ENCODE measurements at regions of chr2 and their contacts with region 1.

Region 1: DNA sequence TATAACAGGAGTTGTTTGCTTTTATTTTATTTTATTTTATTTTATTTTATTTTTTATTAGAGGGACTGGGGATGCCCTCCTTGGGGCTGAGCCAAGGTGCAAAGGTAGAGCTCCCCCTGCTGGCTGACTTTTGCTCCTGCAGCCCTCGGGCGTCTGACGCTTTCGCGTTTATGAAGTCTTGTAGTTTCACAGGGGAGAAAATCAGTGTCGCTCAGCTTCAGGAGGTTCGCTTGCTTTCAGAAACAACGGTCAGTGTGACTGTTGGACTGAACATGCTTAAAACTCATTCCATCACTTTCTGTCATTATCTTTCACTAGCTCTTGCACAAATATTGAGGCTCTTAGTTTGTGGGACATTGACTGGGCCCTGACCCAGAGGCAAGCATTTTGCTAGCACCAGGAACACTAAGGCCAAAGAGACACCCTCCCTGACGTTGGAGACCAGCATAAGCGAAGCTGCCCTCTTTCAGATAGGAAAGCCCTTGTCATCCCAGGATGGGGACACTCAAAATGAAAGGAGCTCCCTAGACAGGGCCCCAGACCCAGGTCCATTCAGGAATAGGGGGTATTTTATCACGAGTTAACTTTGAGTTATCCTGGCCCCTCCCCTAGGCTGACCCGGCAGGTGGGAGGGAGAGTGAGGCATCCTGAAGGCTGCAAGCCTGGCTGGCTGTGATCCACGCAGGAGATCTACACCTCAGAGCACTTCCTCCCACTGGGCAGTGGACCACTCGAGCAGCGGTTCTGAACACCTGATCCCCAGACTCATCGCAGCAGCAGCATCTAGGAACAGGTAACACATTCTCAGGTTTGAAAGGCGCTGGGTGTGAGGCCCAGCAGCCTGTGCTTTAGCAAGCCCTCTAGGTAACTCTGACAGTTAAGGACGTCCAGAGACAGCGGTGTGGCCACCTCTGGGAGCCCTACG is 34.4 kb downstream of the LGALSL start:
- DNase-seq: peak; percentile 90

Region 2: GRCh38 chr2:64045938-64046337 is 442.4 kb before region 1 on chr2:
- intact Hi-C with region 1: loop called (anchors 5 kb)
- DNase-seq: no peak

Region 3: DNA sequence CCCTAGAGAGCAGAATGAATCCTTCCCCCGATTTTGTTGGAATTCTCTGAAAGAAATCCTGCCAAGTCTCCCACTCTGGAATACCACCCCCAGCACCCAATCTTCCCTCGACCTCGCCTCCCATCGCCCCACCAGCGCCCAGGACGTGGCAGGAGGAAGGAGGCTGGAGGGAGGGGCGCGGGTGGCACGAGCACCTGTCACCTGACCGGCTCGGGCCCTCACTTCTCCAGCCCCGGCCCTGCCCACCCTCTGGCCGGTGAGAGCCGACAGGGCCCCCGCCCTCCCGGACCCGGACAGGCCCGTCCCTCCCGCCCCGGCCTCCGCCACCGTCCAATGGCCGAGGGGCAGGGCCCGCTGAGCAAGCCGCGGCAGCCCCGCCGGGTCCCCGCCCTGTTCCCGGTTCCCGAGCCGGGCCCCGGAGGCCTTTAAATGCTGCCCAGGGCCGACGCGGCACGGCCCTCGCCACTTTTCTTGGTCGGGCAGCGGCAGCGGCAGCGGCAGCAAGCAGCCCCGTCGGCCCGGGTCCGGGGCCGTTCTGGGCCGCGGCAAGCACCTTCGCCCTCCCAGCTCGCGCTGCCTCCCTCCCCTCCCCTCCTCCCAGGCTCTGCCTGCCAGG is 34.4 kb before region 1 on chr2 and contains the start of gene LGALSL:
- intact Hi-C with region 1: loop called (anchors 2 kb)
- DNase-seq: peak; percentile 88
- total RNA-seq, gene LGALSL: 13.1 TPM

Region 4: DNA sequence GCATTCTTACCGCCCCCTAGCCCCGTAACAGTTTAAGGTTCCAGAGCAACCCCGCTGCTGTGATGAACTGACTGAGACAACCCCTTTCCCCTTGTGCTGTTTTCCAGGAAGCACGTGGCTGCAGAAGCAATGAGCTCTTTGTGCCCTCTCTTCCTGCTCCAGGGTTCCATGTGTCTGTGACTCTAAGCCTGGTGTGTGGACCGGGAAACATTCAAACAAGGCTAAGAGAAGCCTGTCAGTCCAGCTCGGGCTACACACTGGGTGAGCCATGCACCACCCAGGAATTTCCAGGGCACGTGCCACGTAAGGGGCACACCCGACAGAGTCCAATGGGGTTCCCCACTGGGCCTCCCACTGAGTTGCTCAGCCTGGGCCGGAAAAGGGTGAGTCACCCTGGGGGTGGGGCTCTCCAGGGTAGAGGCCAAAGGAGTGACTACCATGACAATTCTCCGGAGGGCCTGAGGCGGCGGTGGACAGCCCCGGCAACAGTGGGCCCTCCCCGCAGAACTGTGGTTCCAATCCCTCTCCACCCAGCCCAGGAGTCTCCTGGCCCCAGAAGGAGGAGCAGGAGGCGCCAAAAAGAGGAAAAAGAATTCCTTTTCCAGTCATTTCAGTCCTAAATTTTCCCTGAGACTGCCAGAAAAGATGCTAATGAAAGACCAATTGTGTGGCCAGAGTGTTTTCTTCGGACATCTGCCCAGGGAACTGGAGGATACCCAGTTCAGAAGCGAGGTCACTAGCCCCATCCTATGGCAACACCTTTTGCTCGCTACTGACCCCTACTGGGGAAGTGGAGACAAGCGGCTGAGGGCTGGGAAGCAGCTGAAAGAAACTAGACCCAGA is 343.0 kb after region 1 on chr2:
- intact Hi-C with region 1: no loop called
- DNase-seq: peak; percentile 92

Measured in cardiac septum (tissue), 1 donor.